PC-3 (cell line): ENCODE measurements at regions of chr3 and their contacts with region 1.

Region 1: GRCh38 chr3:43497905-43498365 is 123.9 kb downstream of the ANO10 start:
- DNase-seq: peak; percentile 19
- ATAC-seq: peak; percentile 72
- H3K4me3 ChIP-seq: no peak overlapping the region
- H3K27ac ChIP-seq: 0 out of 2 replicates have a peak overlapping the region, but pooled peaks have one; percentile 5
- H3K4me1 ChIP-seq: peaks cover 15% of the 10 kb centered on the region
- H3K27me3 ChIP-seq: no peaks in the 10 kb centered on the region
- CTCF ChIP-seq: no peak

Region 2: DNA sequence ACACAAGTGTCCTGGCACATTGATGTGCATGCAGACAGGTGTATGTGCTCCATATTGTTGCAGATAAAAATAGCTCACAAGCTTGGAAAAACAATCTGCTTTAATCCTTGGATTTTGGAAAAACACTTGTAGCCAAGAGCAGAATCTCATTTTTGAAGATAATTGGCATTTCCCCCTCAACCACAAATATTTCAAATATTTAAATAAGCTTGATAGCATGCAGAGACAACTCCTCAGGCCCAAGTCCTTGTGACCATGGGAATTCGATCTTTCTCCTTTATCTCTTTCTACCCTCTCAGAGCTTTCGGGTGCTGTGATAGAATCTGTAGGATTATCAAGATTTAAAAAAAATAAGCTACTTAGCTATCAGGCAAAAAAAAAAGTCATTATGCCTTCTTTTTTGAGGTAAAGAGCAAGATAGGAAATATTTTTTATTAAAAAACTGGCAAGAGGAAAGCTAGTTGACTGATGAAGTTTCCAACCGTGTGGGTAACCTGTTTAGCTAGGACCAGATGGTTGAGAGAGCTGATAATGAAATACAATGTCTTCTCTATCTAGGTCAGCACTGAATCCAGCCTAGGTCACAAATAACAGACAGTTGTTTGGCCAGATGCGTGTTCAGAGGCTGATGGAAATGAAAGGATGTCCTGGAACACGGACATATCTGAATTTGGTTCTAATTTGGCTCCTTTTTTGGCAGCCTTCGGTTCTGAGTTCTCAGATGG is 266.5 kb before region 1 on chr3:
- CTCF ChIA-PET with region 1: no interaction called
- POLR2A ChIA-PET with region 1: no interaction called
- intact Hi-C with region 1: loop called (anchors 2 kb)
- DNase-seq: no peak
- ATAC-seq: no peak
- H3K4me3 ChIP-seq: no peak overlapping the region
- H3K27ac ChIP-seq: no peak overlapping the region
- H3K4me1 ChIP-seq: peaks cover 20% of the 10 kb centered on the region
- H3K27me3 ChIP-seq: no peaks in the 10 kb centered on the region
- CTCF ChIP-seq: no peak

Region 3: GRCh38 chr3:43349716-43350115 is 148.2 kb before region 1 on chr3:
- CTCF ChIA-PET with region 1: no interaction called
- POLR2A ChIA-PET with region 1: no interaction called
- intact Hi-C with region 1: loop called (anchors 10 kb)
- DNase-seq: no peak
- ATAC-seq: no peak
- H3K4me3 ChIP-seq: no peak overlapping the region
- H3K27ac ChIP-seq: no peak overlapping the region
- H3K4me1 ChIP-seq: no peaks in the 10 kb centered on the region
- H3K27me3 ChIP-seq: no peaks in the 10 kb centered on the region
- CTCF ChIP-seq: no peak

Region 4: DNA sequence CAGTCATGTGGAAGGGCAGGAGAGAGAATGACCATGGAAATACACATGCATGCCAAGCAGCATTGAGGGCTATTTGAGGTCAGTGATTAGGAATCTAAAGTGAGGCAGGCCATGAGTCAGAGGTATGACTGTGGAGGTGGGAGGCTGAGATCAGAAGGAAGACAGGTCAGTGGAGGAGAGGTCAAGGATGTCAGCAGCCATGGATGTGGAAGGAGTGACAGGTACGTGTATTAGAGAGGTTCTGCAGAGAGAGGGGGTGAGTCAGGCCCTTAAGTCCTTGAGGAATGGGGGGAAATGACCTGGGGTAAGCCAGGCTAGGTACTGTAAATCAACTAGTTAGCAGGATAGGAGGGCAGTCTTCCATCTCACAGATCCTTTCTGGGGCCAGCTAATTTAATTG is 42.7 kb before region 1 on chr3:
- CTCF ChIA-PET with region 1: no interaction called
- POLR2A ChIA-PET with region 1: no interaction called
- intact Hi-C with region 1: no loop called
- DNase-seq: peak; percentile 75
- ATAC-seq: peak; percentile 91
- H3K4me3 ChIP-seq: no peak overlapping the region
- H3K27ac ChIP-seq: peak overlapping the region; percentile 35
- H3K4me1 ChIP-seq: peaks cover 11% of the 10 kb centered on the region
- H3K27me3 ChIP-seq: no peaks in the 10 kb centered on the region
- CTCF ChIP-seq: no peak

Region 5: GRCh38 chr3:44442596-44443309 is 944.8 kb after region 1 on chr3:
- CTCF ChIA-PET with region 1: no interaction called
- POLR2A ChIA-PET with region 1: interaction called, 12 read pairs
- intact Hi-C with region 1: no loop called
- DNase-seq: no peak
- ATAC-seq: no peak
- H3K4me3 ChIP-seq: no peak overlapping the region
- H3K27ac ChIP-seq: no peak overlapping the region
- H3K4me1 ChIP-seq: no peaks in the 10 kb centered on the region
- H3K27me3 ChIP-seq: no peaks in the 10 kb centered on the region
- CTCF ChIP-seq: no peak